Dorsolateral prefrontal cortex (tissue), 120 donors: ENCODE measurements at regions of chr14 and their contacts with region 1.

Region 1: GRCh38 chr14:22766456-22767322 is at the start of gene OXA1L:
- DNase-seq: peak; percentile 91 to 96 (median 95)
- H3K4me3 ChIP-seq: peak within 1 kb of the TSS; percentile 61 to 99 (median 89)
- H3K27ac ChIP-seq: peak within 1 kb of the TSS; percentile 71 to 98 (median 93)
- H3K27me3 ChIP-seq: no peaks in the 10 kb centered on the region
- CTCF ChIP-seq: peak in 38 of 56 donors; percentile 5 to 55 (median 28)
- total RNA-seq, gene OXA1L: 33.8 to 82.0 (median 55.8) TPM

Region 2: GRCh38 chr14:22502007-22502406 is 264.7 kb before region 1 on chr14:
- intact Hi-C with region 1: no loop called
- DNase-seq: no peak
- H3K4me3 ChIP-seq: no peak overlapping the region
- H3K27ac ChIP-seq: no peak overlapping the region
- H3K27me3 ChIP-seq: peaks cover 0 to 7% (median 0%) of the 10 kb centered on the region in 45 donors
- CTCF ChIP-seq: no peak

Region 3: GRCh38 chr14:22589096-22589839 is 177.4 kb before region 1 on chr14 and contains the start of gene DAD1:
- intact Hi-C with region 1: loop called (anchors 2 to 5 kb)
- DNase-seq: peak; percentile 91 to 98 (median 95)
- H3K4me3 ChIP-seq: peak within 1 kb of the TSS; percentile 47 to 99 (median 86)
- H3K27ac ChIP-seq: peak within 1 kb of the TSS; percentile 24 to 94 (median 84)
- H3K27me3 ChIP-seq: no peaks in the 10 kb centered on the region
- CTCF ChIP-seq: peak in 19 of 56 donors; percentile 6 to 44 (median 26)
- total RNA-seq, gene DAD1: 71.6 to 171 (median 110) TPM

Region 4: GRCh38 chr14:22791301-22791700 is 24.6 kb after region 1 on chr14:
- intact Hi-C with region 1: no loop called
- DNase-seq: no peak
- H3K4me3 ChIP-seq: no peak overlapping the region
- H3K27ac ChIP-seq: no peak overlapping the region
- H3K27me3 ChIP-seq: no peaks in the 10 kb centered on the region
- CTCF ChIP-seq: no peak

Region 5: DNA sequence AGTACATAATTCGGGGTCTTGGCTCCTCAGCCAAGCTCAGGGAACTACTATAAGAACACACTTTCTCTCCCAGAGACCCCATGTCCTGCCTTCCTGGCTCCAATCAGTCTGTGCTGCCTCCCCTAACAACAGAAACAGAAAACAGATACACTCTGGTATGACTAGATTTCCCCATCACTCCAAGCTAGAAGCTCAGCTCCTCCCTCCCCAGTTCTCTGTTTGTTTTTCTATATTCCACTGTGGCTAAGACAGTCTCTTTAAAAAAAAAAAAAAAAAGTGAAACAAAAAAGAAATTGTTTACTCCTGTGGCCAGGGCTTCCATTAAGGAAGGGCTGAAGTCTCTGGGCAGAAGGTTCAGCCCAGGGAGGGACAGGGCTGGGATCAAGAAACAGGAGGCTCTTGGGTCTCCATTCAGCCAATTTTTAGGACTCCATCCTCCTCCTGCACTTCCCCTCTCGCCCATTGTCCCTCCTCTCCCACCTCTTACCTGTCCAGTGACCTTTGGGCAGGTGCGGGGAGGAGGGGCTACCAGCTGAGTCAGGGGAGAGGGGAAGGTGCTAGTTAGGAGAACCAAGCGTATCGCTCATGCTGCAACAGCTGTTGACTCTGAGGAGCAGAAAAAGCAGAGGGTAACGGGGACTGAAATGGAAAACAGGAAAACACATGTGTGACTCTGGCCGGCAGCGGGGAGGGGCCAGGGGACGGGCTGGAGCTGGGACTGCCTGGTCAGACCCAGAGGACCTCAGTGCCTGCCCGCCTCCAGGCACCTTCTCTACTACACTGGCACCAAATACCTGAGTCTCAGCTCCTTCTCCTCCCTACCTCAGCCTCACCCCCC is 52.7 kb after region 1 on chr14:
- intact Hi-C with region 1: no loop called
- DNase-seq: peak in 1 of 10 donors; percentile 42
- H3K4me3 ChIP-seq: peak overlapping the region in 40 of 59 donors; percentile 3 to 48 (median 32)
- H3K27ac ChIP-seq: peak overlapping the region in 30 of 59 donors; percentile 2 to 82 (median 48)
- H3K27me3 ChIP-seq: peaks cover 0 to 10% (median 0%) of the 10 kb centered on the region in 45 donors
- CTCF ChIP-seq: no peak

Region 6: DNA sequence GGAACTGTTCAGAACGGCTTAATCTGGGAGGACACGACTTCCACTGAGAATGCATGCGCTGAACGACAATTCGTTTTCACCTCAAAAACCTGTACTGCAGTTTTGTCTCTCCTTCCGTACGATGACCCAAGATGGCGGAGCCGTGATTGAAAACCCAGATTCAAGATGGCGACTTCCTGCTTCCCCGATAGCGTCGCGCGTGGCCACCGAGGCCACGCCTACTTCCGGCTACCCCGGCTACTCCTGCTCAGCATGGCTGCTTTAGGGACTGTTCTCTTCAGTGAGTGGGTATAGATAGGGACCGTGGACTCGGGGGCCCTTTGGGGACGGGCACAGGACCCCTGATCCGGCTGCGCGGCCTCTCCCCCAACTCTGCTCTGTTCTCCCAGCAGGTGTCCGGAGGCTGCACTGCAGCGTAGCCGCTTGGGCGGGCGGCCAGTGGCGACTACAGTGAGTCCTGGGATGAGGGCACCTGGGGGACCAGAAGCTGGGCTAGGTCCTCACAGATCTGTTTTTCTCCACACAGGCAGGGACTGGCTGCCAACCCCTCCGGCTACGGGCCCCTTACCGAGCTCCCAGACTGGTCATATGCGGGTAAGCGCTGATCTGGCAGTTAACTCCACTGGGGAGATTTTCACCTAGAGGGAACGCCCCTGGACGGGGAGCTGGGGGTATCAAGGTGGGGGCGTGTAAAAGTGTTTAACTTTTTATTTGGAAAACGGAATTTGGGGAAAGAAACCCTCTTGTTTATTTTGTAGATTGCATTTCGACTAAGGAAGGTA is 63.2 kb after region 1 on chr14 and contains the start of gene MRPL52:
- intact Hi-C with region 1: loop called (anchors 2 to 5 kb)
- DNase-seq: peak; percentile 78 to 93 (median 89)
- H3K4me3 ChIP-seq: peak within 1 kb of the TSS; percentile 70 to 100 (median 92)
- H3K27ac ChIP-seq: peak within 1 kb of the TSS in 57 of 59 donors; percentile 10 to 92 (median 81)
- H3K27me3 ChIP-seq: peaks cover 0 to 15% (median 0%) of the 10 kb centered on the region in 45 donors
- CTCF ChIP-seq: peak in 41 of 56 donors; percentile 5 to 64 (median 37)
- total RNA-seq, gene MRPL52: 37.4 to 83.2 (median 56.3) TPM

Region 7: DNA sequence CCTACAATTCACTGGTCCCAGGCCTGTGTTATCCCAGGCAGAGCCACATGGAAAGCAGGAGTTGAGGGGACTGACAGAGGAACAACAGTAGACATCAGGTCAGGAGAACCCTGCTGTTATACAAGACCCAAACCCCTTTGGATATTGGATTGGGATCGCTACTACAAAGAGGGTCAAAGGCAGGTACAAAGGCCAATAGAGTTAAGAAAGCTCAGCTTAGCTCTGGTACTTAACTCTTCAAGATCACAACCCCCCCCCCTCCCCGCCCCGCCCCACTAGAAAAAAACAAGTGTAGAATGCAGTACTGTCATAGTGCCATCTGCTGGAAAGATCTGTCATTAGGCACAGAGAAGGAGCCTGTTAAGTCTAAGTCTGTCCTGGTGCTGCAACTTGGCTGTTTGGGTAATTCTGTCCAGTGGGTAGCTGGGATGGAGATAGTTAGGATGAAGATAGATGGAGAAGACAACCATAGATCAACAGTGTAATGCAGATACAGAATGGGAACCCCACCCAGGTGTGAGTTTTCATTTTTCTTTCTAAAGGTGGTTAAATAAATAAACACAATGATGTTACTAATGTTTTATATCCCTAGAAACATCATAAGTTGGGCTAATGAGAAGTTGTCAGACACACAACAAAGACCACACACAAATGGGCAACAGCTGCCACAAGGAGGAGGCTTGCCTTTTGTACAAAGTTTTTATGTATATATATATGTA is 133.6 kb after region 1 on chr14:
- intact Hi-C with region 1: loop called in 1 of 2 experiments (anchors 10 kb)
- DNase-seq: no peak
- H3K4me3 ChIP-seq: no peak overlapping the region
- H3K27ac ChIP-seq: peak overlapping the region in 34 of 59 donors; percentile 2 to 75 (median 47)
- H3K27me3 ChIP-seq: no peaks in the 10 kb centered on the region
- CTCF ChIP-seq: peak in 55 of 56 donors; percentile 21 to 73 (median 58)